Heart left ventricle (tissue), 16 donors: ENCODE measurements at regions of chr1 and their contacts with region 1.

Region 1: DNA sequence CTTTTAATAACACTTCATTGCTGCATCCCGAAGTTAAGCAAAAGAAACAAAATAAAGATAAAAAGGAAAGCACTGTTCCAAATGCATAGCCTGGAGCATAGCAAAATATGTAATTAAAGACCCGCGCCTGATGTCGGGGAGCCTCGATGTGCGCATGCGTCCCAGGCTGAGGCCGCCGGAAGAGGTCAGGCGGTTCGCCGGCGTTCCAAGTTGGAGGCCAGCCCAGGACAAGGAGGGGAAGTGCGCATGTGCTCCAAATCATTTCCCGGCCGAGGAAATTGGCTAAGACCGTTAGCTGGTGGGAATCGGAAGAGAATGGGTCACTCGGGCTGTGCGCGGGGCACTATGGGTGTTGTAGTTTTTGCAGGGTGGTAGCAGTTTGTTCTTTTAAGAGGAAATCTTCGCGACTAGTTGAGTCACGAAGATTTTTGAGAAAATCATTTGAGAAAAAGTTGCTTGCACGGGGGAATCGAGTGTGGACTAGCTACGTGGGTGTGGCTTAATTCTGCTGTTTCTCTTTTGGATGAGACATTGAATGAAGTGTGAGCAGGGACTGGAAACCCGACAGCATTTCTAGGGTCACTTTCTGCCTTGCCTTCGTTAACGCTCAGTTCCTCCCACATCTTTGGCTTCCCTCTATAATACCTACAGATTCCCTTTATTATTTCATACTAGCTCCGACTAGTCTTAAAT is 31.0 kb upstream of the CD1D start:
- DNase-seq: peak; percentile 97 to 98 (median 97)
- ATAC-seq: peak; percentile 93 to 98 (median 96)
- H3K4me3 ChIP-seq: peak overlapping the region; percentile 2 to 57 (median 46)
- H3K27ac ChIP-seq: peak overlapping the region; percentile 62 to 94 (median 80)
- H3K4me1 ChIP-seq: peaks cover 0 to 78% (median 25%) of the 10 kb centered on the region in 12 donors
- H3K27me3 ChIP-seq: no peaks in the 10 kb centered on the region
- CTCF ChIP-seq: no peak
- POLR2A ChIP-seq: peak in 1 of 2 donors; percentile 43

Region 2: GRCh38 chr1:158177700-158178450 is 28.2 kb after region 1 on chr1:
- intact Hi-C with region 1: loop called in 3 of 10 experiments (anchors 2 to 5 kb)
- DNase-seq: peak; percentile 91 to 97 (median 96)
- ATAC-seq: peak; percentile 99
- H3K4me3 ChIP-seq: peak overlapping the region; percentile 18 to 61 (median 54)
- H3K27ac ChIP-seq: peak overlapping the region in 8 of 12 donors; percentile 0 to 63 (median 46)
- H3K4me1 ChIP-seq: peaks cover 0 to 41% (median 17%) of the 10 kb centered on the region in 12 donors
- H3K27me3 ChIP-seq: peaks cover 0 to 5% (median 0%) of the 10 kb centered on the region in 9 donors
- CTCF ChIP-seq: no peak
- POLR2A ChIP-seq: no peak

Region 3: DNA sequence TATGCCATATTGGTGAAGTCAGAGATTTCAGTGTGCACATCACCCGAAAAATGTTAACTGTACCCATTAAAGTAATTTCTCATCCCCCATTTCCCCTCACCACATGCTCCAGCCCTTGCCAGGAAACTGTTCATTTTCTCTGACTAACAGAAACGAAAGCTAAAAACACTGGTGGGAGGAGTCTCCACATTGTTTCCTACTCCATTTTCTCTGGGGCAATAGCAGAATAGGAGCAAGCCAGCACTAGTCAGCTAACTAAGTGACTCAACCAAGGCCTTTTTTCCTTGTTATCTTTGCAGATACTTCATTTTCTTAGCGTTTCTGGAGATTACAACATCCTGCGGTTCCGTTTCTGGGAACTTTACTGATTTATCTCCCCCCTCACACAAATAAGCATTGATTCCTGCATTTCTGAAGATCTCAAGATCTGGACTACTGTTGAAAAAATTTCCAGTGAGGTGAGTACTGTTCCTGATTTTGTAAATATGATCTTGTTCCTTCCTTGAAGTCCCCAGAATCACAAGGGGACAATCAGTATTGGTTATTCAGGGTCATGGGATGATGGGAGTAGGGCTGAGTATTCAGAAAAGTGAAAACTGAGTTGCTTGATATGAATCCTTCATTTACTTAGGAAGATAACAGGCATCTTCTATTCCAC is 860.1 kb after region 1 on chr1 and contains the start of gene IFI16:
- intact Hi-C with region 1: loop called in 2 of 10 experiments (anchors 5 to 10 kb)
- DNase-seq: peak in 3 of 5 donors; percentile 56 to 73 (median 63)
- ATAC-seq: peak; percentile 76 to 93 (median 92)
- H3K4me3 ChIP-seq: peak within 1 kb of the TSS; percentile 37 to 82 (median 60)
- H3K27ac ChIP-seq: peak within 1 kb of the TSS; percentile 69 to 99 (median 86)
- H3K4me1 ChIP-seq: peaks cover 0 to 68% (median 20%) of the 10 kb centered on the region in 12 donors
- H3K27me3 ChIP-seq: no peaks in the 10 kb centered on the region
- CTCF ChIP-seq: no peak
- POLR2A ChIP-seq: peak in 1 of 2 donors; percentile 68
- total RNA-seq, gene IFI16: 19.1 to 125 (median 23.7) TPM